HEK293 (cell line): ENCODE measurements at regions of chr6 and their contacts with region 1.

Region 1: GRCh38 chr6:149963462-149964307 is at the start of gene ULBP1:
- H3K4me3 ChIP-seq: peak within 1 kb of the TSS; percentile 61
- H3K27ac ChIP-seq: peak within 1 kb of the TSS; percentile 72; the same call in 1 of the 2 replicates
- H3K4me1 ChIP-seq: peaks cover 3% of the 10 kb centered on the region
- CTCF ChIP-seq: peak; percentile 35; the same call in 1 of the 2 replicates

Region 2: DNA sequence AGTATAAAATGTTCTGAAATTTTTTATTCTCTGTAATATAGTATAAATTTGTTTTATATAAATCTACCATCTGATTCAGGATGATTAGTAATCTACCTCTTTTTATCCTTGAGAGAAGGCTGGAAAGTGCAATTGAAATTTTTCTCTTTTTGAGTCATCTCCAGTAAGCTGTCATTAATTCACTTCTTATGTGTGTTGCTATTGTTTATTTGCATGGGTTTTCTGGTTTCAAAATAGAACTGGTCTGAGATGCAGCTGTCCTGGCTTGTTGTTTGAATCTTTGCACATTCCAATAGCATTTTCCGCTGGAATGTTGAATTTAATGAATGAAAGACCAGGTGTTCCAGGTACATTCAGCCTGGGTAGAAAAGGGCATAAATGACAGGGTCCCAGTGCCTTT is 670.4 kb before region 1 on chr6:
- CTCF ChIA-PET with region 1: no interaction called
- POLR2A ChIA-PET with region 1: no interaction called
- H3K4me3 ChIP-seq: no peak overlapping the region
- H3K27ac ChIP-seq: no peak overlapping the region
- H3K4me1 ChIP-seq: no peaks in the 10 kb centered on the region
- CTCF ChIP-seq: no peak

Region 3: DNA sequence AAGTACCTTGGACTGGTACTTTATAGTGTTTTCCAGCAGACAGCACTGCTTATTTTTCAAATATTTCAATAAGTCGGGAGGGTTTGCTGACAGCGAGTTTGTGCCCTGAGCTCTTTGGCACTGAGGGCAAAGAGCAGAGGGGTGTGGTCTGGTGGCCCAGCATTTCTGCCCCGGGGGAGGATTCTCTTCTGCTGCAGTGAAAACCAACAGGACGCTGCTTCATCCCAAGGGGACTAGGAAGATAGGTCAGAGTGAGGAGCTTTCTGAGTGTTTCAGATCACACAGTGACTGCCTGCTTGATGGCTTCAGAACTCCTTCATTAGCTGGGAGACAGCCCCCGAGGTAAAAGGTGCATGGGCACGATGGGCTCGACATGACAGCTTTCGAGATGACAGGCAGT is 13.3 kb before region 1 on chr6:
- CTCF ChIA-PET with region 1: interaction called, 10 read pairs
- POLR2A ChIA-PET with region 1: interaction called, 10 read pairs
- H3K4me3 ChIP-seq: no peak overlapping the region
- H3K27ac ChIP-seq: no peak overlapping the region
- H3K4me1 ChIP-seq: no peaks in the 10 kb centered on the region
- CTCF ChIP-seq: no peak

Region 4: GRCh38 chr6:149985481-149985937 is 21.8 kb after region 1 on chr6:
- CTCF ChIA-PET with region 1: interaction called, 5 read pairs
- POLR2A ChIA-PET with region 1: interaction called, 11 read pairs
- H3K4me3 ChIP-seq: no peak overlapping the region
- H3K27ac ChIP-seq: no peak overlapping the region
- H3K4me1 ChIP-seq: peaks cover 6% of the 10 kb centered on the region
- CTCF ChIP-seq: no peak

Region 5: DNA sequence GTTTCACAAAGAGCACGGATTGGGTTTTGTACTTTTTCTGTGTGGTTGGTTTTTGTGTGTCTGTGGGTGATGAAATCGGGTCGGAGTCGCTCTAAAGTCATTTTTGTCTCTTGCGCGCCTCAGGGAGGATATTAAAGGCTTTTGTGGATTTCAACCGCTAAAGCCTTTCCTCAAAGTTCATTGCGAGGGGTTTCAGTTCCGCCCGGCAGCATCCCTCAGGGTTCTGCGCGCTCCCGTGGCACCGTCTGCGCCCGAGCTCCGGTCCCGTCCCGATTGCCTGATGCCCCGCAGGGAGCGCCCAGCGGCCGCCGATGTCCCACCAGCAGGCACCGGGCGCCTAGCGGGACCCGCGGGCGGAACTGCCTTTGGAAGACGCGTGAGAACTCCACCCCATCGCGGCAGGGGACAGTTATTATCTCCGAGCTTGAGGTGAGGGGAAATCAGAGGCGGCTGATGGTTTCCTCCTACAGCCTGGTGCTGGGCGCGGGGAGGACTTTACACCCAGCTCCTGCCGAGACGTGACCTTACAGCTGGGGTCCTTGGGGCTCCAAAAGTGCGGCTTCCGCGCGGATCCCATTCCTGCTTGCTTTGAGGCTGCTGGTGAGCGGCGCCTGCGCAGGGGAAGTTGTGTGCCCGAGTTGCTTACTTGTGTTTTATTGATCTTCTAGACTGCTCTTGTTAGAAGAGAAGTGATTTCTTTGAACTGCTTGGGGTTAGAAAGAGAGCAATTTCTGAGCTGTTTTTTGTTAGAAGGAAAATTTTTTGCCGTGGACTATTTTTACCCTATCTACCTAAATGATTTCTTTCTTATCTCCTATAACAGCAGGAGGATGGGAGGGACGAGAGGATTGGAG is 27.2 kb after region 1 on chr6:
- CTCF ChIA-PET with region 1: interaction called, 7 read pairs
- POLR2A ChIA-PET with region 1: interaction called, 11 read pairs
- H3K4me3 ChIP-seq: peak overlapping the region; percentile 47
- H3K27ac ChIP-seq: no peak overlapping the region
- H3K4me1 ChIP-seq: peaks cover 6% of the 10 kb centered on the region
- CTCF ChIP-seq: peak; percentile 56

Region 6: GRCh38 chr6:150006961-150007464 is 43.3 kb after region 1 on chr6:
- CTCF ChIA-PET with region 1: interaction called, 13 read pairs
- POLR2A ChIA-PET with region 1: interaction called, 6 read pairs
- H3K4me3 ChIP-seq: no peak overlapping the region
- H3K27ac ChIP-seq: no peak overlapping the region
- H3K4me1 ChIP-seq: peaks cover 3% of the 10 kb centered on the region; the same call in 1 of the 2 replicates
- CTCF ChIP-seq: peak; percentile 42

Region 7: DNA sequence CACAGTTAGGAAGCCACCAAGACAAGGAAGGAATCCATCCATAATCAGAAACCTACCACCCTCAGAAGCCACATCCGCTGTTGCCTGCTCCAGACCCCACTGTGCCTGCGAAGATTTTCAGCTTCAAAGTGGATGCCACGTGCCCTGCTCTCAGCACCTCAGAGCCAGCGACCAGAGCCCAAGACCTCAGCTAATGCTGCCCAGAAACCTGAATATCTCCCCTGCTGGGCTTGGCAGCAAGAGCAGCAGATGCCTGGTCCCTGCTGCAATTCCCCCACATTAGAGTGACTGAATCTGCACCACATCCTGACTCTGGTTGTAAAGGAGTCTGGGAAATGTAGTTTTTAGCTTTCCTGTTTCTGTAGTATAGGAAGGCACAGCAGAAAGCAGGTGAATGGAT is 115.9 kb after region 1 on chr6:
- CTCF ChIA-PET with region 1: no interaction called
- POLR2A ChIA-PET with region 1: no interaction called
- H3K4me3 ChIP-seq: no peak overlapping the region
- H3K27ac ChIP-seq: peak overlapping the region; percentile 16; the same call in 1 of the 2 replicates
- H3K4me1 ChIP-seq: peaks cover 14% of the 10 kb centered on the region
- CTCF ChIP-seq: no peak; the same call in 1 of the 2 replicates